Activated CD4-positive, alpha-beta T cell treated with anti-CD3 and anti-CD28 coated beads, Interleukin-2, amount 10 ng/mL, durations not matched to agents 7 days and 5 days (primary cell): ENCODE measurements at regions of chr16 and their contacts with region 1.

Region 1: DNA sequence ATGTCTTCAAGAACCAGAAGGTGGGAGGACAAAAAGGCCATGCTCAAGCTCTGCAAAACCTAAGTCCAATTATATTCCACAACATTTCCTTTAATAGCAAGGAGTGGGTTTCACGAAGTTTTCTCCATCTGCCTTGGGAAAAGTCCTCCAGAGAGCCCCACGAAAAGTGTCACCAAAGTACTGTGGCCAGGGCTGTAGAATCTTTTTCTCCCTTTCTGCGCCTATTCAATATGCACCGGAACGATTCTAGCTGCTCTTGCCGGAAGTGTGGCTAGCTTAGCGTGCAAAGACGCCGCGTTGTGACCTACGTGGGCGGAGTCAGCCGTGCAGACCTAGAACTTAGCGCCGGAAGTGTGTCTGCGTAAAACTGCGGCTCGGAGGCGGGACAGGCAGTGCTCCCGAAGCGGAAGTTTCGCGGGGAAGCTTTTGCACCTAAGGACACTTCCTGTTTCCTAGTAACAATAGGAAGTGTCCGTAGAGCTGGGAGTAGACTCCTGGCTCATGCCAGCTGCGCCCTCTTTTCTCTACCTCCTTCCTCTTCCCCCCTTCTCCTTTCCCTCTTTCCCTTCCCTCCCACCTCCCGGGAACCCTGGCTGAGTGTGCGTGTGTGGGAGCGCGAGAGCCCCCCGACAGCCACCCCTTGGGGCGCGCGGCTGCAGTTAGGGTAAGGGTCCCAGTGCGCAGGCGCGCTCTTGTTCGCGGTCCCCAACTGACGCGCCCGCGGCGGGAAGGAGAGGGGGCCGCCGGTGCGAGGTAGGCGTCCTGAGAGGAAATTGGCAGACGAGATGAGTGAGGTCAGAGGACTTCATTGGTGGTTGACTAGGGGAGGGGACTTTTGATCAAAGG is at the starts of genes ZNF646 and ZNF668:
- DNase-seq: peak; percentile 99
- H3K4me3 Mint-ChIP-seq: peak within 1 kb of the TSS; percentile 91
- H3K27ac Mint-ChIP-seq: peak within 1 kb of the TSS; percentile 94
- H3K4me1 Mint-ChIP-seq: peaks cover 30% of the 10 kb centered on the region
- H3K27me3 Mint-ChIP-seq: no peaks in the 10 kb centered on the region
- total RNA-seq, gene ZNF646: 28.3 to 33.3 TPM
- total RNA-seq, gene ZNF668: 11.2 to 12.9 TPM

Region 2: GRCh38 chr16:30997000-30997886 is 76.9 kb before region 1 on chr16:
- CTCF ChIA-PET with region 1: no interaction called
- POLR2A ChIA-PET with region 1: no interaction called
- DNase-seq: peak; percentile 81
- H3K4me3 Mint-ChIP-seq: peak overlapping the region; percentile 77
- H3K27ac Mint-ChIP-seq: peak overlapping the region; percentile 82
- H3K4me1 Mint-ChIP-seq: peaks cover 24% of the 10 kb centered on the region
- H3K27me3 Mint-ChIP-seq: peaks cover 8% of the 10 kb centered on the region

Region 3: DNA sequence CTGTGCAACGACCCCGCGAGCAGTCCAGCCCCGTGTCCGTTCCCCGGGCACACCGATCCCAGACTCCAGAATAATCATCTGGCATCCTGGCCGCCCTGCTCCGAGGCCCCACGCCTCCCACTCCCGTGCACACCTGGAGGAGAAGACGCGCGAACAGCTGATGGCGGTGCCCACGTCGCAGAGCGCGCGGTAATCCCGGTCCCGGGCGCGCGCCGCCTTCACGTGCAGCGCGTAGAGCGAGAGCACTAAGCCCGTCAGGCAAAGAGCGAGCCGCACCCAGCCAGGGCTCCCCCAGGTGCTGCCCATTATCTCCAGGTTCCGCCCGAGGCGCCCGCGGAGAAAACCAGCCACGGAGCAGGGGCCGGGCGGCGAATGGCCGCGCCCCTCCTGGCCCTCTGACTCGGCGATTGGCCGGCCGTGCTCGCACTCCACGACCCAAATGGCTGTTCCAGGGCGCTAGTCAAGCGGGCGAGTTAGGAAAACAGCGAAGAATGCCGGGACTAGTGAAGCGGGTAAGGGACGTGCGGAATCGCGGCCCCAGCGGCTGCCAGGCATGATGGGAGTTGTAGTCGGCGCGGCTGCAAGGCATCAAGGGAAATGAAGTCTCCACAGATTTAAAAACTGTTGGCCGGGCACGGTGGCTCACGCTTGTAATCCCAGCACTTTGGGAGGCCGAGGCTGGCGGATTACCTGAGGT is 20.4 kb after region 1 on chr16 and contains the start of gene VKORC1:
- CTCF ChIA-PET with region 1: interaction called, 13 read pairs
- POLR2A ChIA-PET with region 1: interaction called, 3 read pairs
- DNase-seq: peak; percentile 91
- H3K4me3 Mint-ChIP-seq: peak within 1 kb of the TSS; percentile 93
- H3K27ac Mint-ChIP-seq: peak within 1 kb of the TSS; percentile 94
- H3K4me1 Mint-ChIP-seq: peaks cover 33% of the 10 kb centered on the region
- H3K27me3 Mint-ChIP-seq: no peaks in the 10 kb centered on the region
- total RNA-seq, gene VKORC1: 55.5 to 59.3 TPM

Region 4: GRCh38 chr16:31134625-31135547 is 60.7 kb after region 1 on chr16:
- CTCF ChIA-PET with region 1: no interaction called
- POLR2A ChIA-PET with region 1: no interaction called
- DNase-seq: no peak
- H3K4me3 Mint-ChIP-seq: no peak overlapping the region
- H3K27ac Mint-ChIP-seq: no peak overlapping the region
- H3K4me1 Mint-ChIP-seq: no peaks in the 10 kb centered on the region
- H3K27me3 Mint-ChIP-seq: no peaks in the 10 kb centered on the region